ENCODE measurements at regions of chr20 and their contacts with region 1.

Region 1: GRCh38 chr20:8722276-8722928 is 346.5 kb upstream of the PLCB4 start:
- DNase-seq: peak; percentile 83
- H3K4me3 ChIP-seq: no peak overlapping the region
- H3K27ac ChIP-seq: no peak overlapping the region
- H3K4me1 ChIP-seq: no peaks in the 10 kb centered on the region
- H3K27me3 ChIP-seq: no peaks in the 10 kb centered on the region
- CTCF ChIP-seq: peak; percentile 62
- POLR2A ChIP-seq: no peak

Region 2: DNA sequence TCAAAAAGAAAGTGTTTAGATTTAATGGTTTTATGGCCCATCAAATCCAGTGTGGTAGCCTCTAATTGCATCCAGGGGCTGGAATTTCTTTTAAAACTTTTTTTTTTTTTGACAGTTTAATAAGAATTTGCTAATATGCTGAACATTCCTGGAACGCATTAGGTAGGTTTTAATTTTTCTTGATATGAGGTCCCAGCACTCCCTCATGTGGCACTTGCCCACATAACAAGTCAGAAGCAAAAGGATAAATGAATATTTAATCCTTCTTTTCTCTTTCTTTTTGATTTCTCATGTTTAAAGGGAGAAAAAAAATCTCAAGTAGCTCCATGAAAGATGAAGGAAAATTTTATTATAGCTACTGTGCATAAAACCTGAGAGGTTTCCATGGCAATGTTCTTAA is 795.6 kb before region 1 on chr20:
- CTCF ChIA-PET with region 1: interaction called, 11 read pairs
- POLR2A ChIA-PET with region 1: no interaction called
- dilution Hi-C with region 1: no loop called
- intact Hi-C with region 1: no loop called
- DNase-seq: peak; percentile 75
- H3K4me3 ChIP-seq: no peak overlapping the region
- H3K27ac ChIP-seq: peak overlapping the region; percentile 92
- H3K4me1 ChIP-seq: peaks cover 26% of the 10 kb centered on the region
- H3K27me3 ChIP-seq: no peaks in the 10 kb centered on the region
- CTCF ChIP-seq: peak; percentile 47 to 52
- POLR2A ChIP-seq: no peak

Region 3: DNA sequence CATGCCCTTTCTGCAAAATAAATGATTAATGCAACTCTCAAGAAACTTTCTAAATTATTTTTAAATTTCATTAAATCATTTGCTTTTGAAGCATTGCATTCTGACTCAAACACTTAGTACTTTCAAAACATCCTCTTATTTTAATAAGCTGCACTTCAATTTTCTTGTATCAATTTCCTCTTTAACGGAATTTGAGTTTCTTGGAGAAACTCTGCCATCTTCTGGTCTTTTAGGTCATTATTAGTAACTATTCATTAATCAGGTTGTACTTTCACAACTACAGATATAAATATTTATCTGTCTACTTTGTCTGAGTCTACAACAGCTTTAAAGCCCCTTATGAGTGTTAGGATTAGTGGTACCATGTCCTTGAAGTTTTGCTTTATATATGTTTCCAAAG is 733.0 kb before region 1 on chr20:
- CTCF ChIA-PET with region 1: interaction called, 179 read pairs
- POLR2A ChIA-PET with region 1: no interaction called
- dilution Hi-C with region 1: no loop called
- intact Hi-C with region 1: no loop called
- DNase-seq: peak; percentile 11
- H3K4me3 ChIP-seq: no peak overlapping the region
- H3K27ac ChIP-seq: no peak overlapping the region
- H3K4me1 ChIP-seq: no peaks in the 10 kb centered on the region
- H3K27me3 ChIP-seq: no peaks in the 10 kb centered on the region
- CTCF ChIP-seq: no peak
- POLR2A ChIP-seq: no peak

Region 4: GRCh38 chr20:8144282-8145245 is 577.8 kb before region 1 on chr20:
- CTCF ChIA-PET with region 1: interaction called, 11 read pairs
- POLR2A ChIA-PET with region 1: no interaction called
- dilution Hi-C with region 1: no loop called
- intact Hi-C with region 1: no loop called
- DNase-seq: peak; percentile 54
- H3K4me3 ChIP-seq: no peak overlapping the region
- H3K27ac ChIP-seq: peak overlapping the region; percentile 44
- H3K4me1 ChIP-seq: peaks cover 53% of the 10 kb centered on the region
- H3K27me3 ChIP-seq: no peaks in the 10 kb centered on the region
- CTCF ChIP-seq: no peak
- POLR2A ChIP-seq: no peak

Region 5: GRCh38 chr20:8408587-8409307 is 313.7 kb before region 1 on chr20:
- CTCF ChIA-PET with region 1: interaction called, 10 read pairs
- POLR2A ChIA-PET with region 1: no interaction called
- dilution Hi-C with region 1: no loop called
- intact Hi-C with region 1: no loop called
- DNase-seq: no peak
- H3K4me3 ChIP-seq: no peak overlapping the region
- H3K27ac ChIP-seq: no peak overlapping the region
- H3K4me1 ChIP-seq: no peaks in the 10 kb centered on the region
- H3K27me3 ChIP-seq: no peaks in the 10 kb centered on the region
- CTCF ChIP-seq: no peak
- POLR2A ChIP-seq: no peak

Region 6: DNA sequence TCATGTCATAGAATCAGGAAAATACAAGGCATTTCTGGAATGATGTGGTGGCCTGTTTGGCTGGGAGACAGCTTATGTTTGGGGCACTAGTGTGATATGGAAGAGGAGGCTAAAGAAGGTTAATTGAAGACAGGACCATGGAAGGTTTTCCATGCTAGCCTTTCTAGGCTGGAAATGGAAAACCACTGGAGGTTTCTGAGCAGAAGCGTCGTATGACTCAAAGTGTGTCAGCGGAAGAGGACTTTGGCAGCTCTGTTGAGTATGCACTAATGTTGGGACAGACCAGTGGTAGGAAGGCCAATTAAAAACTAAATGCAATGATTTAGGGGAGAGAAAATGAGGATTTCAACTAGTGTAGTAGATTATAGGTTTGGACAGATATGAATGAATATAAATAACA is 177.2 kb before region 1 on chr20:
- CTCF ChIA-PET with region 1: interaction called, 12 read pairs
- POLR2A ChIA-PET with region 1: no interaction called
- dilution Hi-C with region 1: no loop called
- intact Hi-C with region 1: no loop called
- DNase-seq: no peak
- H3K4me3 ChIP-seq: no peak overlapping the region
- H3K27ac ChIP-seq: no peak overlapping the region
- H3K4me1 ChIP-seq: peaks cover 29% of the 10 kb centered on the region
- H3K27me3 ChIP-seq: no peaks in the 10 kb centered on the region
- CTCF ChIP-seq: no peak
- POLR2A ChIP-seq: no peak

Region 7: DNA sequence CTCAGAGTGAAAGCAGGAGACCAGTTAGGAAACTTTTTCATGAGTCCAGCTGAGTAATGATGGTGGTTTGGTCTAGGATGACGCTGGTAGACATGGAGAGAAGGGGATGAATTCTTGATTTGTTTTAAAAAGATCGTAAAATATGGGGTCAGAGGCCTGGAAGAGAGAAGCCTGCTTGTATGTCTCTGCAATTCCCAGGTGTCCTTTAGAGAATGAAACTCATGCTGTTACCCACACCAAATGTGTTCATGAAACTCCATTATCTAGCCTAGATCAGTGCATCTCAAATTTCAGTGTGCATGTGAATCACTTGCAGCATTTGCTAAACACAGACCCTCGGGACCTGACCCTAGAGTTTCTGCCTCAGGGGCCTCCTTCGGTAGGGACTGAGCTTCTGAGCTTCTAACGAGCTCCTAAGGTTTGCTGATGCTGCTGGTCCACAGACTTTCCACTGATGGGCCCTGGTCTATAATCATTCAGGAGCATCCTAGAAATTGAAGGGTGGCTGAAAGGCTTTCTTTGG is 44.5 kb after region 1 on chr20:
- CTCF ChIA-PET with region 1: no interaction called
- POLR2A ChIA-PET with region 1: no interaction called
- dilution Hi-C with region 1: no loop called
- intact Hi-C with region 1: no loop called
- DNase-seq: no peak
- H3K4me3 ChIP-seq: no peak overlapping the region
- H3K27ac ChIP-seq: no peak overlapping the region
- H3K4me1 ChIP-seq: no peaks in the 10 kb centered on the region
- H3K27me3 ChIP-seq: no peaks in the 10 kb centered on the region
- CTCF ChIP-seq: no peak
- POLR2A ChIP-seq: no peak

Region 8: DNA sequence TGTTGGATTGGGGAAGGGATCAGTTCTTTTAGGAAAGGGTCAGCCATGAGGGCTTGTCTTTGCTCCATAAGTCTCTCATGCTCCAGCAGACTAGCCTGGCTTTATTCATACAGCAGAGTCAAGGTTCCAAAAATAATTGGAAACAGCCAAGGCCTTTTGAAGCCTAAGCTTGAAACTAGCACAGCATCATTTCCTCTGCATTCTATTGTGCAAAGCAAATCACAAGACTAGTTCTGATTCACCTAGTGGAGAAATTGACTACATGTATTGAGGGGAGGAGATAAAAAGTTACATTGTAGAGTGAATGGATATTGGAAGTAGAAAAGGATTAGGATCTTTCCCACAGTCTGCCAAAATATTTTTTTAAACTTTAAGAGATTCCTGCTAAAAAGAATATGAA is 187.2 kb after region 1 on chr20:
- CTCF ChIA-PET with region 1: no interaction called
- POLR2A ChIA-PET with region 1: no interaction called
- dilution Hi-C with region 1: no loop called
- intact Hi-C with region 1: no loop called
- DNase-seq: no peak
- H3K4me3 ChIP-seq: no peak overlapping the region
- H3K27ac ChIP-seq: no peak overlapping the region
- H3K4me1 ChIP-seq: no peaks in the 10 kb centered on the region
- H3K27me3 ChIP-seq: no peaks in the 10 kb centered on the region
- CTCF ChIP-seq: no peak
- POLR2A ChIP-seq: no peak

Measured in endothelial cell of umbilical vein (primary cell).